Activated CD4-positive, alpha-beta T cell treated with anti-CD3 and anti-CD28 coated beads for 36 hours (primary cell): ENCODE measurements at regions of chr10 and their contacts with region 1.

Region 1: GRCh38 chr10:6062101-6062771 is at the start of gene IL2RA:
- DNase-seq: peak; percentile 87
- ATAC-seq: peak; percentile 79
- H3K4me3 Mint-ChIP-seq: peak within 1 kb of the TSS; percentile 91
- H3K27ac Mint-ChIP-seq: peak within 1 kb of the TSS; percentile 93
- H3K4me1 Mint-ChIP-seq: peaks cover 53% of the 10 kb centered on the region
- H3K27me3 Mint-ChIP-seq: peaks cover 3% of the 10 kb centered on the region
- total RNA-seq, gene IL2RA: 659 to 980 TPM

Region 2: GRCh38 chr10:6045314-6045848 is 16.9 kb before region 1 on chr10:
- CTCF ChIA-PET with region 1: interaction called, 20 read pairs
- POLR2A ChIA-PET with region 1: interaction called, 12 read pairs
- intact Hi-C with region 1: loop called (anchors 1 kb)
- DNase-seq: peak; percentile 68
- ATAC-seq: peak; percentile 20
- H3K4me3 Mint-ChIP-seq: peak overlapping the region; percentile 65
- H3K27ac Mint-ChIP-seq: peak overlapping the region; percentile 94
- H3K4me1 Mint-ChIP-seq: peaks cover 86% of the 10 kb centered on the region
- H3K27me3 Mint-ChIP-seq: no peaks in the 10 kb centered on the region

Region 3: GRCh38 chr10:6083523-6084475 is 21.6 kb after region 1 on chr10:
- CTCF ChIA-PET with region 1: interaction called, 113 read pairs
- POLR2A ChIA-PET with region 1: interaction called, 33 read pairs
- intact Hi-C with region 1: loop called in 1 of 2 experiments (anchors 1 kb)
- DNase-seq: peak; percentile 85
- ATAC-seq: peak; percentile 79
- H3K4me3 Mint-ChIP-seq: peak overlapping the region; percentile 71
- H3K27ac Mint-ChIP-seq: peak overlapping the region; percentile 95
- H3K4me1 Mint-ChIP-seq: peaks cover 67% of the 10 kb centered on the region
- H3K27me3 Mint-ChIP-seq: no peaks in the 10 kb centered on the region

Region 4: GRCh38 chr10:6580279-6581029 is 518.2 kb after region 1 on chr10:
- CTCF ChIA-PET with region 1: no interaction called
- POLR2A ChIA-PET with region 1: no interaction called
- intact Hi-C with region 1: no loop called
- DNase-seq: peak; percentile 93
- ATAC-seq: peak; percentile 72
- H3K4me3 Mint-ChIP-seq: peak overlapping the region; percentile 89
- H3K27ac Mint-ChIP-seq: peak overlapping the region; percentile 97
- H3K4me1 Mint-ChIP-seq: peaks cover 59% of the 10 kb centered on the region
- H3K27me3 Mint-ChIP-seq: no peaks in the 10 kb centered on the region

Region 5: DNA sequence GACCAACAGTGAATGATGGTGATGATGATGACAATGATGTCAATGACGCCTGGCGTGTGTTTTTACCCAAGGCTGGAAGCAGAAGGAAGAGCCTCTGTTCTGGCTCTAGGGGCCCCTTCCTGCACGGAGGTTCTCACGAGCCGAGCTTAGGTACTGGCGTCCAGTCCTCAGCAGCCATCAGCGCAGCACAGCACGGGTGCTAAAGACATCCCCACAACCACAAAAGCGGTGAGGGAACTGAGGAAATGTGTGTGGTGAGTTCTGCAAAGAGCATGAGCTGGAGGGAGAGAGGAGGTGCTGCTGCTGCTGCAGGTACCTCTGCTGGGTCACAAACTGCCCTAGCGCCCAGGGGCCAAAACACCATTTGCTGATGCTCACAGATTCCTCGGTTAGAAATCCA is 1267.0 kb after region 1 on chr10:
- CTCF ChIA-PET with region 1: no interaction called
- POLR2A ChIA-PET with region 1: no interaction called
- intact Hi-C with region 1: no loop called
- DNase-seq: no peak
- ATAC-seq: no peak
- H3K4me3 Mint-ChIP-seq: no peak overlapping the region
- H3K27ac Mint-ChIP-seq: no peak overlapping the region
- H3K4me1 Mint-ChIP-seq: peaks cover 17% of the 10 kb centered on the region
- H3K27me3 Mint-ChIP-seq: no peaks in the 10 kb centered on the region